ENCODE measurements at regions of chr6 and their contacts with region 1.

Region 1: GRCh38 chr6:168851460-168852375 is 401.9 kb downstream of the THBS2 start:
- DNase-seq: no peak

Region 2: GRCh38 chr6:168789699-168790098 is 62.0 kb before region 1 on chr6:
- intact Hi-C with region 1: loop called in 1 of 2 experiments (anchors 2 kb)
- DNase-seq: no peak

Region 3: GRCh38 chr6:168925671-168926070 is 74.0 kb after region 1 on chr6:
- intact Hi-C with region 1: loop called in 1 of 2 experiments (anchors 2 kb)
- DNase-seq: no peak

Region 4: GRCh38 chr6:169008644-169009257 is 157.0 kb after region 1 on chr6:
- intact Hi-C with region 1: no loop called
- DNase-seq: no peak